Activated B cell treated with CpG ODN at 0.5 μM for 24 hours (primary cell): ENCODE measurements at regions of chr17 and their contacts with region 1.

Region 1: GRCh38 chr17:49707608-49708514 is at the start of gene SLC35B1:
- DNase-seq: peak; percentile 89
- ATAC-seq: peak; percentile 99
- H3K4me3 Mint-ChIP-seq: peak within 1 kb of the TSS; percentile 93
- H3K27ac Mint-ChIP-seq: peak within 1 kb of the TSS; percentile 99
- H3K4me1 Mint-ChIP-seq: peaks cover 44% of the 10 kb centered on the region
- H3K27me3 Mint-ChIP-seq: no peaks in the 10 kb centered on the region
- CTCF ChIP-seq: no peak
- total RNA-seq, gene SLC35B1: 51.8 and 53.8 TPM in 2 replicates

Region 2: DNA sequence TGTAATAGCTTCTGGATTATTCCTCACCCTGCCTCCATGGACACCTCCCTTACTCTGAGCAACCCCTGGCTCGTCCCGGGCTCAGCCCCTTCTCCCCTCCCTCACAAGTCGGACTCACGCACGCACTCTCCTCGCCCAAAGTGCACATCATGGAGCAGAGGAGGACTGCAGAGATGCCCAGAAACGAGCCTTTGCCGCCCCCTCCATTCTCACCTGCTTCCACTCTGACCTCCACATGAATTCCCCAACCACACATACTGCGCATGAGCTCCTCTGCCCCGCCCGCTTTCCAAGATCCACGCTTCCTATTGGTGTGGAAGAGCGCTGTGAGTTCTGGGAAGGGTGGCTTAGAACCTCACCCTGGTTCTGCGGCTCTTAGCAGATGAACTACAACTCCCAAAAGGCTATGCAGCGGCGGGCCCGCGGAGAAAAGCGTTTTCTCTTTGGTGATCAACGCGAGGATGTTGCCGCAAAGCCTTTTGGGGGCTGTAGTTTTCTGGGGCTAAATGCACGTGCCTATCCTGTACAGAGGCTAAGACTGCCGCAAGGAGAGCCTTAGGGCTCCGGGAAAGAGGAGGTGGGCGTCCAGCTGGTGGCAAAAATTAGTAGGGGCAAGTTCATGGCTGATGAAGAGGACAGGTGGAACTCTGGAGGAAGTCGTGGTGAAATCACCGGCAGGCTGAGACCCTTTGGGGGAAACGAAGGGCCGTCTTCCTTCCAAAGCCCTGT is 293.1 kb before region 1 on chr17 and contains the start of gene PHB1:
- CTCF ChIA-PET with region 1: no interaction called
- POLR2A ChIA-PET with region 1: no interaction called
- intact Hi-C with region 1: loop called (anchors 5 kb)
- DNase-seq: peak; percentile 78
- ATAC-seq: peak; percentile 98
- H3K4me3 Mint-ChIP-seq: peak within 1 kb of the TSS; percentile 100
- H3K27ac Mint-ChIP-seq: peak within 1 kb of the TSS; percentile 89
- H3K4me1 Mint-ChIP-seq: peaks cover 24% of the 10 kb centered on the region
- H3K27me3 Mint-ChIP-seq: no peaks in the 10 kb centered on the region
- CTCF ChIP-seq: no peak
- total RNA-seq, gene PHB1: 184 and 214 TPM in 2 replicates

Region 3: GRCh38 chr17:49739641-49740271 is 31.9 kb after region 1 on chr17:
- CTCF ChIA-PET with region 1: interaction called, 11 read pairs
- POLR2A ChIA-PET with region 1: interaction called, 11 read pairs
- intact Hi-C with region 1: loop called (anchors 1 kb)
- DNase-seq: peak; percentile 75
- ATAC-seq: peak; percentile 91
- H3K4me3 Mint-ChIP-seq: peak overlapping the region; percentile 81
- H3K27ac Mint-ChIP-seq: peak overlapping the region; percentile 99
- H3K4me1 Mint-ChIP-seq: peaks cover 87% of the 10 kb centered on the region
- H3K27me3 Mint-ChIP-seq: no peaks in the 10 kb centered on the region
- CTCF ChIP-seq: no peak

Region 4: DNA sequence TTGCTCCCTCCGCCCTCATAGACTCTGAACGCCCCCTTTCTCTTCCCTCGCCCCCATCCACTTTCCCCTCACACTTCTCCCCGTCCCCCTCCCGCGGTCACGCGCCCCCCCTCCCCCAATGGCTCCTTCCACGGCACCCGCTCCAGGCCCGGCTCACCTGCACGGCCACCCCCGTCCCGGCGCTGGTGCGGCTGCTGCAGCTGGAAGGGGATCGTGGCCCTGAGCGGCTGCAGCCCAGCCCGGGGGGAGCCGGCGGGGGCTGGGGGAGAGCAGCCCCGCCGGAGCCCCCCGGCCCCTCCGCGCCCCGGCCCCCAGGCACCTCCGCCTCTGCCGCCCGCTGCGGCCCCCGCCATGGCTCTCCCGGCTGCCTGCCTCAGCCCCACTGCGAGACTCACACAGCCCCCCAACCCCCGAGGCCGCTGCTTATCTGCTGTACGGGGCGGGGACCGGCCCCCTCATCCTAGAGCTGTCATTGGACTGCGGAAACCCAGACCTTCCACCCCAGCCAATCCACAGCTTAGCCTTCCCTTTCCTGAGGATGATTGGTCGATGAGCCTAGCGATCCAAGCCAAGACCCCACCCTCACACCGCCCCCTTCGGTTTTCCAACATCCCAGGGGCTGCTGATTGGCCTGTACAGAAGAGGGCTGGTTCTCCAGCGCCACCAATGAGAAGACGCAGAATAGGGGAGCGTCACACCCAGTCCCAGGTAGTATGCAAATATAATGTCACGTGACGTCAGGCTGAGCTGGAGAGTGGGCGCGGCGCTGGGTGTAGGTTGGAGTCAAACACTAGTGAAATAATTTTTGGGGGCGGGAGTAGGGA is 56.1 kb after region 1 on chr17 and contains the start of gene FAM117A:
- CTCF ChIA-PET with region 1: interaction called, 22 read pairs
- POLR2A ChIA-PET with region 1: interaction called, 57 read pairs
- intact Hi-C with region 1: loop called (anchors 1 kb)
- DNase-seq: peak; percentile 83
- ATAC-seq: peak; percentile 92
- H3K4me3 Mint-ChIP-seq: peak within 1 kb of the TSS; percentile 94
- H3K27ac Mint-ChIP-seq: peak within 1 kb of the TSS; percentile 79
- H3K4me1 Mint-ChIP-seq: peaks cover 57% of the 10 kb centered on the region
- H3K27me3 Mint-ChIP-seq: no peaks in the 10 kb centered on the region
- CTCF ChIP-seq: no peak
- total RNA-seq, gene FAM117A: 27.7 and 30.0 TPM in 2 replicates

Region 5: GRCh38 chr17:49788478-49789242 is 80.8 kb after region 1 on chr17 and contains the start of gene KAT7:
- CTCF ChIA-PET with region 1: interaction called, 17 read pairs
- POLR2A ChIA-PET with region 1: interaction called, 37 read pairs
- intact Hi-C with region 1: loop called (anchors 1 kb)
- DNase-seq: peak; percentile 90
- ATAC-seq: peak; percentile 86
- H3K4me3 Mint-ChIP-seq: peak within 1 kb of the TSS; percentile 94
- H3K27ac Mint-ChIP-seq: peak within 1 kb of the TSS; percentile 96
- H3K4me1 Mint-ChIP-seq: peaks cover 42% of the 10 kb centered on the region
- H3K27me3 Mint-ChIP-seq: no peaks in the 10 kb centered on the region
- CTCF ChIP-seq: no peak
- total RNA-seq, gene KAT7: 95.0 and 95.8 TPM in 2 replicates